ENCODE measurements at regions of chr10 and their contacts with region 1.

Region 1: DNA sequence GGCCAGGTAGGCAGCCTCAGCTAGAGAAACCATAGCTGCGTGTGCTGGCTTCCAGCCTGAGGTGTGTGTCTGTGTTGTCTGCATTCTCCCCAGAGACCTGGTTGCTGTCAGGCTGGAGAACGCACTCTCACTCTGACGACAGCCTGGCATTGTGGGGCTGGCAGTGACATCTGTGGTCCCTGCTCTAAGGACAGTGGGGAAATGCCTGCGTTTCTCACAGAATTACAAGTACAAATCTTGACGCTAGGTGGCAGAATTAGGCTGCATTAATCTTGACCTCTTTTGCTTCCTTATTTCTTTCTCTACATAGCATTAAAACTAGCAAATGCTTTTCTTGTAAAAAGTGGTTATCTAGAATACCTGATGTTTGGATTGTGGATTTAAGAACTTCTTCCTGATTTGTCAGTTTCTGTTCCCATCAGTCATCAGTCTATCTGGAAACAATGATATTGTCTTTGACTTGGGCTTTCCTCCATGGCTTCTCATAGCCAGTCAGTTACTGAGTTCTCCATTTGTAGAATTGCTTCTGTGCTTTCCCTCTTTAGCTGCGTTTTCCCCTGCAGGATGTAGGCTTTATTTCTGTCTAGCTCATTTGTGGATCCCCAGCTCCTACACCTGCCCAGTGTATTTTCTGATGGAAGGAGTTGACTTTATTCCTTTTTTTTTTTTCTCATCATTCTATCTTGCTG is 86.0 kb downstream of the FANK1 start:
- DNase-seq: peak in 13 of 35 experiments; percentile 2 to 64 (median 20)
- ATAC-seq: peak in 2 of 4 experiments; percentile 39 to 61
- H3K4me3 ChIP-seq: no peak overlapping the region
- H3K4me3 Mint-ChIP-seq: no peak overlapping the region
- H3K27ac ChIP-seq: no peak overlapping the region
- H3K27ac Mint-ChIP-seq: no peak overlapping the region
- H3K4me1 ChIP-seq: no peaks in the 10 kb centered on the region
- H3K4me1 Mint-ChIP-seq: peaks cover 0 to 2% (median 0%) of the 10 kb centered on the region in 3 donors
- H3K27me3 ChIP-seq: peaks cover 0 to 7% of the 10 kb centered on the region in 2 experiments
- H3K27me3 Mint-ChIP-seq: peaks cover 14 to 28% of the 10 kb centered on the region in 2 donors

Region 2: DNA sequence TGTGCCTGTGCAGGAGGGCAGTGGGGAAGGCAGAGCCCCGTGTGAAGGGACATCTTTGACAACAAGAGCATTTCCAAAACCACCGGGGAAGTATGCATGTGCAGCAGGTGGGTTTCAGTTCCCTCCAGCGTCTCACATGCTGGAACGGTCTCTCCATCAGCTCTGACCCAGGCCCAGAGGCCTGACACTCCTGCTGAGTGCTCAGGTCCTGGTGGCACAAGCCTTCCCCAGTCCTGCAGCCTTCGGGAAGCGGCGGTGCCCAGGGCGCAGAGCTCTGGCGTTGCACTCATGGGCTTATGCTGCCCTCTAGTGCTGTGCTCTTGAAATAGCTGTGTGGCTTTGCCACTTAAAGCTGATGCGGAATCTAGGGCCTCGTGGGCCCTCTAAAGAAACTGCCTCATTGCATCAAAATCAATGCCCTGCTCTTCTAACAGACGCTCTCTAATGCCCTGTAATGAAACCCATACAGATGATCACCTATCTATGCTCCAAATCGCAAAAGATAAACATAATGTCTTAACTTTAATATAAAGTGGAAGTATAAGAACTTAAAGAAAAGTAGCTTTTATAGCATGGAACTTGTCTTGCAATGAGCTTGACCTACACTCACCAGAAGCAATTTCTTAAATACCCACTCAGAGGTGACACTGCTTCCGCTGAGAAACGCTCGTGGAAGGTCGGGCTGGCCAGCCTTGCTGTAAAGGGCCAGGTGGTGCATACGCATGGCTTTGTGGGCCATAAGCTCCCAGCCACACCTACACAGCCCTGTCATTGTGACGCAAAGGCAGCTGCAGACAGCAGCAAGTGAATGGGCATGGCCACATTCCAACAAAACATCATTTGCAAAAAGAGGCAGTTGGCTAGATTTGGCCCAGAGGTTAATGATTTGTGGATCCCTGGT is 1871.7 kb after region 1 on chr10:
- CTCF ChIA-PET with region 1: interaction called, 7 to 14 read pairs
- POLR2A ChIA-PET with region 1: no interaction called
- DNase-seq: peak in 28 of 35 experiments; percentile 6 to 68 (median 31)
- ATAC-seq: peak; percentile 56 to 75 (median 58)
- H3K4me3 ChIP-seq: no peak overlapping the region
- H3K4me3 Mint-ChIP-seq: no peak overlapping the region
- H3K27ac ChIP-seq: no peak overlapping the region
- H3K27ac Mint-ChIP-seq: no peak overlapping the region
- H3K4me1 ChIP-seq: peaks cover 0 to 4% of the 10 kb centered on the region in 2 experiments
- H3K4me1 Mint-ChIP-seq: peaks cover 5 to 10% (median 9%) of the 10 kb centered on the region in 3 donors
- H3K27me3 ChIP-seq: peaks cover 0 to 16% of the 10 kb centered on the region in 2 experiments
- H3K27me3 Mint-ChIP-seq: peaks cover 9 to 10% of the 10 kb centered on the region in 2 donors